ENCODE measurements at regions of chr1 and their contacts with region 1.

Region 1: DNA sequence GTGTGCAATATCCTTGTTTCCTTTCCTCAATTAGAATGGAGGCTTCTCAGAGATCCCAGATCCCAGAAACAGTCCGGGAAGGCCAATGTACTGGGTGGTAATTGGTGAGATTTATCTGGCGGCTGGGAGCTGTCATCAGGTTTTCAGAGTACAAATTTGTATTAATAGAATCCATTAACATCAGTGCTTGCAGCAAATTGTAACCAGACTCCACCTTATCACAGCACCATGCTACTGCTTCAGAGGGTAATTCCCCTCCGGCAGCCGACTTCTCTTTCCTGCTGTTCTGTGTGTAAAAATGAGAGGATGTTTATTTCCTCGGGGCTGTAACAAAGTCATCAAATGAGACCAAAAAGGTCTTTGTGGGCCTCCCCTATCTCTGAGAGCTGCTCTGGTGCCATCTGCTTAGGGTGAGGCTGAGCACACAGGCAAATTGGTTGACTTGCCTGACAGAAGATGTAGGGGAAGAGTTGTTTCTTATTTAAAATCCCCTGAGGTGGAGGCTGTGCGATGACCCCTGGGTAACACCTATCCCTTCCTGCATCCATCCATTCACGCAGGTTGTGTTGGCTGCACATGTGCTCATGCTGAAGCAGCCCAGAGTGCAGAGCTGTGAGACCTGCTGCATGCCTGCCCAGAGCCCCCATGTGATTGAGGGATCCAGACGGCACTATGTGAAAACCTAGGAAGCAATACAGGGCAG is 19.2 kb downstream of the NFASC start:
- DNase-seq: no peak

Region 2: DNA sequence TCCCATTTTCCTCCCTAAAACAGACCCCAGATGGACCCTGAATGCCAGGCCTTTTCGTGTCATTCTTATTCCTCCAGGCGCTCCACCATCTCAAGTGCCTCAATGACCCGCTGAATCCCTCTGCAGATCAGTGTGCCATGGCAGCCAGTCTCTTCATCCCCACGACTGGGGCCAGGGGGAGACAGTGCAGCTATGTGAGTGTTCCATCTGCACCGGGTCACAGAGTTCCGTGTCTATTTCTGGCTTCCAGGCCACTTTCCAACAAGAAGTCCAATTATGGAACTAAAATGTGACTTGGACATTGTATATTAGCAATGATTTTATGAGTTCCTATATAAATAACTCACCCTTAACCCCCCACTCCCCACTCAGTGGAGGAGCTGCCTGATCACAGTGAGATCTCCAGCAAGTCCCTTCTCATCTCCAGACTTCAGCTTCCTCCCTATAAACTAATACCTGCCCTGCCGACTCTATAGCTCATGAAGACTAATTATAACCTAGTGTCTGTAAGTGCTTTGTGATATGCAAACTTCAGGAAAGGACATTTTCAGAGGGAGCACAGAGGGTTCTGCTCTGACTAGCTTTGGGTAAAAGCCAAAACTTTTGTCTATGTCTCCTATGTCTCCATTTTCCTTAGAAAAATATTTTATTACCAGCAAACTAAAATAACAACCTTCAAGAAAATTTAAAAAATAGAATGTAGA is 75.5 kb before region 1 on chr1:
- intact Hi-C with region 1: loop called (anchors 2 kb)
- DNase-seq: no peak

Measured in cardiac septum (tissue), 1 donor.